Activated T-helper 2 cell treated with anti-CD3 and anti-CD28 coated beads, Interferon-gamma antibody, Interleukin-2, Interleukin-4, amounts not matched to agents 10 μg/mL and 5 μg/mL and 100 μg/mL, durations not matched to agents 14 hours and 24 hours and 36 hours (primary cell): ENCODE measurements at regions of chr2 and their contacts with region 1.

Region 1: GRCh38 chr2:85930129-85931124 is 41.6 kb upstream of the ST3GAL5 start:
- DNase-seq: no peak
- H3K4me3 Mint-ChIP-seq: no peak overlapping the region
- H3K27ac Mint-ChIP-seq: no peak overlapping the region
- H3K4me1 Mint-ChIP-seq: peaks cover 24% of the 10 kb centered on the region
- H3K27me3 Mint-ChIP-seq: peaks cover 4% of the 10 kb centered on the region

Region 2: DNA sequence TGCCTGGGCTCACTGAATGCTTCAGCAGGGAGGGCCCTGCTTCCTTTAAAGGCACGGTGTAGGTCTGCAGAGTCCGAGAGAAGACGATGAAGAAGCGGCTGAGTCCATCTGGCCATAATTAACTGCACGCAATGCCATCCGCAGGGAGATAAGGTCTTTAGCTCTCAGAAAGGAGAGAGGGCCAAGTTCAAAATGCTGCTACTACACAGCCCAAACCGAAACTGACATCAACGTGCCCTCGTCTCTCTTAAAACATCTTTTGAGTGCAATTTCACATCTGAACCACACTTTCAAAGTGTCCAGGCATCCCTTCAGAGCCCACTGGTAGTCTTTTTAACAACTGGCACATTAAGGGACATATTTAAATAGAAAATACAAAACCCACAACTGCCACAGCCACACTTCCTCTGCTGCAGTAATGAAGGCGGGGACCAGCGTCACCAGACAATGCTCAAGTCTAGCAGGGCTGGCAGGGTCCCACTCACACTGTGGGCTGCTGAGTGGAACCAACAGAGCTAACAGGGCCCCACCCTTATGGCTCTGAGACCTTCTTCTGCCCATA is 77.4 kb before region 1 on chr2:
- intact Hi-C with region 1: no loop called
- DNase-seq: peak; percentile 54
- H3K4me3 Mint-ChIP-seq: peak overlapping the region; percentile 75
- H3K27ac Mint-ChIP-seq: peak overlapping the region; percentile 99
- H3K4me1 Mint-ChIP-seq: peaks cover 62% of the 10 kb centered on the region
- H3K27me3 Mint-ChIP-seq: no peaks in the 10 kb centered on the region

Region 3: GRCh38 chr2:85902496-85902895 is 27.9 kb before region 1 on chr2:
- intact Hi-C with region 1: loop called (anchors 2 kb)
- DNase-seq: no peak
- H3K4me3 Mint-ChIP-seq: no peak overlapping the region
- H3K27ac Mint-ChIP-seq: no peak overlapping the region
- H3K4me1 Mint-ChIP-seq: peaks cover 9% of the 10 kb centered on the region
- H3K27me3 Mint-ChIP-seq: peaks cover 6% of the 10 kb centered on the region